Posterior cingulate gyrus (tissue), 11 donors: ENCODE measurements at regions of chr10 and their contacts with region 1.

Region 1: DNA sequence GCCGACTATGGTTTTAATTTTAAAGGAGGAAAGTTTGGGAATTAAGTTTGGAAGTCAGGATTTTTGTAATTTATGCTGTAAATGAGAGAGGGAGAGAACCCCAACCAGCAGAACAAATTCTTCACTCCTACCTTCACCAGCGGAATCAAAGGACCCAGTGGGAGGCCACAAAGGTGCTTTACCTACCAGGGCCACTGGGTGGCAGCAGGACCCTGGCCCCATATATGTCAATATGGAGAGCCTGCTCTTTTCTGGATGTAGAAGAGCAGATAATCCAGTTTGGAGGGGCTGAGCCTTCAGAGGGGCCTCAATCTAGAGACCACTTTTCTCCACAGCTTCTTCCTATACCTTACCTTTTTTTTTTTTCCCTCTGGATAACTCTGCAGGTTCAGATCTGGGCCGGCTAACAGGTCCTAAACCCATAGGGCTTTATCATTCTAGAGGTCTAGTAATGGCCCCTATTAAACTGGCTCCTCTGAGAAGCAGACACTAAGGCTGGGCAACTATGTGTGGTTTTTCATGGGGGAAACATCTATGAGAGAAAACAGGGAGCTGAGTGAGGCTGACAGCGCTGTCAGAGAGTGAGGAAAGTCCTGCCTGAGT is 8.5 kb upstream of the SCD start:
- DNase-seq: peak; percentile 55 to 96 (median 84)

Region 2: GRCh38 chr10:100286051-100287033 is 52.2 kb before region 1 on chr10 and contains the start of gene BLOC1S2:
- intact Hi-C with region 1: loop called (anchors 5 kb)
- DNase-seq: peak; percentile 83 to 98 (median 88)

Region 3: DNA sequence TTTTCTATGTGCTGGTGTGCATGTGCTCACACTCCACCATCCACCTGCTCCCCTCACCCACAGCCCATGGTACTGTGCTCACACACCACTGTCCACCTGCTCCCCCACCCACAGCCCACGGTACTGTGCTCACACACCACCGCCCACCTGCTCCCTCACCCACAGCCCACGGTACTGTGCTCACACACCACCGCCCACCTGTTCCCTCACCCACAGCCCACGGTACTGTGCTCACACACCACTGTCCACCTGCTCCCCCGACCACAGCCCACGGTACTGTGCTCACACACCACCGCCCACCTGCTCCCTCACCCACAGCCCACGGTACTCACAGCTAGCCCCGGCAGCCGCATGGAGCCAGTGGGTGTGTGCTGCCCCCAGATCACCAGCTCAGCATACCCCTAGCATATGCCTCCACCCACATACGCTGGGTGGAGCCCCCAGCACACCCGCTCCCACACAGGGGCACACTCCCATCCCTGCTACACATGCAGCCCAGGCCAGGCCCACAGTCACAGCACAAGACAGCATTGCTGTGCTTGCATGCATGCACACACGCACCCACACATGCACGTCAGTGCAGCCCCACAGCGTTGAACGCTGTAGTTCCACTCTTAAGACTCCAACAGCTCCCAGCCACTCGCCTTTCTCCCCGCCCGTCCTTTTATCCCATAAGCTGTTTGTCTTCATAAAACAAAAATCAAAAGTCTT is 468.9 kb after region 1 on chr10:
- intact Hi-C with region 1: no loop called
- DNase-seq: peak in 3 of 10 donors; percentile 17 to 80 (median 75)